Heart right ventricle (tissue), 16 donors: ENCODE measurements at regions of chr5 and their contacts with region 1.

Region 1: DNA sequence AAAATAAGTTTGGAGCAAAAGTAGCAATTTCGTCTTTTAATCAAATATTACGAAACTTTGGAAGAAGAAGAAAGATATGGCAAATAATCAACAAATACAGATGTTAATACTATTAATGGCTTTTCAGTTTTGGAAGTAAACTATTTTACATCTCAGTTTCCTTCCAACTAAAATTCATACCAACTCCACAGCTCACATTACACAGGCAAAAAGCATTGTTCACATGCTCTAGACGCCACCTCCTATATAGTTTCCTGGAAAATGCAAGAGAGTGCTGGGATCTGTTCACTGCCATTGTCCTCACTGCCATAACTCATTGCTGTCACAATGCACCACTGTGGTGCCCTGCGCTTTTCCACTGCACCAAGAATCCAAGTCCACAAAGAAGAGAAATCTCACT is 149.0 kb upstream of the FTMT start:
- DNase-seq: no peak
- ATAC-seq: no peak
- H3K4me3 ChIP-seq: no peak overlapping the region
- H3K27ac ChIP-seq: no peak overlapping the region
- H3K4me1 ChIP-seq: no peaks in the 10 kb centered on the region
- H3K27me3 ChIP-seq: no peaks in the 10 kb centered on the region
- CTCF ChIP-seq: no peak

Region 2: GRCh38 chr5:121763665-121764064 is 61.0 kb after region 1 on chr5:
- intact Hi-C with region 1: loop called in 1 of 10 experiments (anchors 10 kb)
- DNase-seq: no peak
- ATAC-seq: no peak
- H3K4me3 ChIP-seq: no peak overlapping the region
- H3K27ac ChIP-seq: no peak overlapping the region
- H3K4me1 ChIP-seq: no peaks in the 10 kb centered on the region
- H3K27me3 ChIP-seq: no peaks in the 10 kb centered on the region
- CTCF ChIP-seq: no peak